Caco-2 (cell line): ENCODE measurements at regions of chr17 and their contacts with region 1.

Region 1: GRCh38 chr17:7296189-7296902 is 1.9 kb upstream of the YBX2 start:
- DNase-seq: peak; percentile 69 to 84
- H3K4me3 ChIP-seq: peak overlapping the region; percentile 12; the same call in 1 of the 2 replicates
- H3K4me3 Mint-ChIP-seq: peak overlapping the region; percentile 43
- H3K27ac Mint-ChIP-seq: peak overlapping the region; percentile 54
- H3K4me1 ChIP-seq: 0 out of 2 replicates have a peak, but pooled peaks cover 10% of the 10 kb centered on the region
- H3K4me1 Mint-ChIP-seq: peaks cover 6% of the 10 kb centered on the region
- H3K27me3 ChIP-seq: no peaks in the 10 kb centered on the region
- H3K27me3 Mint-ChIP-seq: no peaks in the 10 kb centered on the region
- CTCF ChIP-seq: peak; percentile 66 to 76

Region 2: GRCh38 chr17:7263083-7264078 is 33.0 kb before region 1 on chr17:
- CTCF ChIA-PET with region 1: no interaction called
- POLR2A ChIA-PET with region 1: no interaction called
- intact Hi-C with region 1: no loop called
- DNase-seq: peak; percentile 65 to 82
- H3K4me3 ChIP-seq: peak overlapping the region; percentile 61
- H3K4me3 Mint-ChIP-seq: peak overlapping the region; percentile 99
- H3K27ac Mint-ChIP-seq: peak overlapping the region; percentile 97
- H3K4me1 ChIP-seq: peaks cover 26% of the 10 kb centered on the region
- H3K4me1 Mint-ChIP-seq: peaks cover 9% of the 10 kb centered on the region
- H3K27me3 ChIP-seq: no peaks in the 10 kb centered on the region
- H3K27me3 Mint-ChIP-seq: no peaks in the 10 kb centered on the region
- CTCF ChIP-seq: no peak

Region 3: GRCh38 chr17:7280519-7281429 is 15.6 kb before region 1 on chr17:
- CTCF ChIA-PET with region 1: interaction called, 20 read pairs
- POLR2A ChIA-PET with region 1: interaction called, 4 read pairs
- intact Hi-C with region 1: loop called (anchors 1 kb)
- DNase-seq: peak; percentile 67 to 81
- H3K4me3 ChIP-seq: peak overlapping the region; percentile 38
- H3K4me3 Mint-ChIP-seq: peak overlapping the region; percentile 85
- H3K27ac Mint-ChIP-seq: peak overlapping the region; percentile 85
- H3K4me1 ChIP-seq: peaks cover 3% of the 10 kb centered on the region; the same call in 1 of the 2 replicates
- H3K4me1 Mint-ChIP-seq: peaks cover 8% of the 10 kb centered on the region
- H3K27me3 ChIP-seq: no peaks in the 10 kb centered on the region
- H3K27me3 Mint-ChIP-seq: no peaks in the 10 kb centered on the region
- CTCF ChIP-seq: peak; percentile 59 to 68

Region 4: GRCh38 chr17:7314719-7315569 is 18.6 kb after region 1 on chr17 and contains the start of gene GPS2:
- CTCF ChIA-PET with region 1: no interaction called
- POLR2A ChIA-PET with region 1: no interaction called
- intact Hi-C with region 1: no loop called
- DNase-seq: peak; percentile 81 to 86
- H3K4me3 ChIP-seq: peak within 1 kb of the TSS; percentile 82
- H3K4me3 Mint-ChIP-seq: peak within 1 kb of the TSS; percentile 82
- H3K27ac Mint-ChIP-seq: peak within 1 kb of the TSS; percentile 93
- H3K4me1 ChIP-seq: peaks cover 4% of the 10 kb centered on the region; the same call in 1 of the 2 replicates
- H3K4me1 Mint-ChIP-seq: peaks cover 18% of the 10 kb centered on the region
- H3K27me3 ChIP-seq: no peaks in the 10 kb centered on the region
- H3K27me3 Mint-ChIP-seq: no peaks in the 10 kb centered on the region
- CTCF ChIP-seq: no peak
- total RNA-seq, gene GPS2: 36.0 and 39.2 TPM in 2 replicates